IMR-90 (cell line): ENCODE measurements at regions of chrX and their contacts with region 1.

Region 1: GRCh38 chrX:11509786-11510185 is 155.9 kb downstream of the ARHGAP6 start:
- DNase-seq: peak; percentile 76
- ATAC-seq: peak; percentile 91
- H3K4me3 ChIP-seq: no peak overlapping the region
- H3K27ac ChIP-seq: peak overlapping the region; percentile 98
- H3K4me1 ChIP-seq: peaks cover 4% of the 10 kb centered on the region; the same call in 1 of the 2 replicates
- H3K27me3 ChIP-seq: no peaks in the 10 kb centered on the region
- CTCF ChIP-seq: no peak
- POLR2A ChIP-seq: no peak
- RAD21 ChIP-seq: no peak

Region 2: GRCh38 chrX:11381464-11381863 is 128.3 kb before region 1 on chrX:
- CTCF ChIA-PET with region 1: no interaction called
- POLR2A ChIA-PET with region 1: no interaction called
- dilution Hi-C with region 1: no loop called
- in situ Hi-C with region 1: loop called (anchors 10 kb)
- intact Hi-C with region 1: no loop called
- DNase-seq: peak; percentile 63
- ATAC-seq: peak; percentile 75
- H3K4me3 ChIP-seq: no peak overlapping the region
- H3K27ac ChIP-seq: no peak overlapping the region
- H3K4me1 ChIP-seq: peaks cover 3% of the 10 kb centered on the region
- H3K27me3 ChIP-seq: no peaks in the 10 kb centered on the region
- CTCF ChIP-seq: peak; percentile 58
- POLR2A ChIP-seq: no peak
- RAD21 ChIP-seq: peak; percentile 58

Region 3: GRCh38 chrX:11655282-11656015 is 145.7 kb after region 1 on chrX:
- CTCF ChIA-PET with region 1: no interaction called
- POLR2A ChIA-PET with region 1: no interaction called
- dilution Hi-C with region 1: no loop called
- in situ Hi-C with region 1: no loop called
- intact Hi-C with region 1: no loop called
- DNase-seq: no peak
- ATAC-seq: no peak
- H3K4me3 ChIP-seq: no peak overlapping the region
- H3K27ac ChIP-seq: no peak overlapping the region
- H3K4me1 ChIP-seq: no peaks in the 10 kb centered on the region
- H3K27me3 ChIP-seq: no peaks in the 10 kb centered on the region
- CTCF ChIP-seq: no peak
- POLR2A ChIP-seq: no peak
- RAD21 ChIP-seq: no peak

Region 4: DNA sequence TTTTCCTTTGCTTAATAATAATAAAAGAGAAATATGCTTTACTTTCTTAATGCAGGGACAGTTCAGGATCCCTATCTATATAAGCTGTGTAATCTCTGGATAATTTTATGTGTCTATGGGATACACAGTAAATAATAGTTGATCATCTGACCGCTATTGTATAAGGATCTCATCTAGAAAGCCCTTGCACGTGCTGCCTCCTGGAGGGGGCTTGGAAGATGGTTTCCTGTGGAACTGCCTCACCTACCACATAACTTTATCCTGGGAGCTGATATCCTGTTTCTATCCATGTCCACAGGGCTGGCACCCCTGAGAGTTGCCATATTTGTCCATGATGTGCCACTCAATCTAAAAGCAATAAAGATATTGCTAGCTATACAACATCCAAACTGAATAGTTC is 489.2 kb after region 1 on chrX:
- CTCF ChIA-PET with region 1: no interaction called
- POLR2A ChIA-PET with region 1: no interaction called
- dilution Hi-C with region 1: no loop called
- in situ Hi-C with region 1: no loop called
- intact Hi-C with region 1: no loop called
- DNase-seq: no peak
- ATAC-seq: no peak
- H3K4me3 ChIP-seq: no peak overlapping the region
- H3K27ac ChIP-seq: no peak overlapping the region
- H3K4me1 ChIP-seq: no peaks in the 10 kb centered on the region
- H3K27me3 ChIP-seq: no peaks in the 10 kb centered on the region
- CTCF ChIP-seq: no peak
- POLR2A ChIP-seq: no peak
- RAD21 ChIP-seq: no peak